AG04450 (cell line): ENCODE measurements at regions of chr15 and their contacts with region 1.

Region 1: DNA sequence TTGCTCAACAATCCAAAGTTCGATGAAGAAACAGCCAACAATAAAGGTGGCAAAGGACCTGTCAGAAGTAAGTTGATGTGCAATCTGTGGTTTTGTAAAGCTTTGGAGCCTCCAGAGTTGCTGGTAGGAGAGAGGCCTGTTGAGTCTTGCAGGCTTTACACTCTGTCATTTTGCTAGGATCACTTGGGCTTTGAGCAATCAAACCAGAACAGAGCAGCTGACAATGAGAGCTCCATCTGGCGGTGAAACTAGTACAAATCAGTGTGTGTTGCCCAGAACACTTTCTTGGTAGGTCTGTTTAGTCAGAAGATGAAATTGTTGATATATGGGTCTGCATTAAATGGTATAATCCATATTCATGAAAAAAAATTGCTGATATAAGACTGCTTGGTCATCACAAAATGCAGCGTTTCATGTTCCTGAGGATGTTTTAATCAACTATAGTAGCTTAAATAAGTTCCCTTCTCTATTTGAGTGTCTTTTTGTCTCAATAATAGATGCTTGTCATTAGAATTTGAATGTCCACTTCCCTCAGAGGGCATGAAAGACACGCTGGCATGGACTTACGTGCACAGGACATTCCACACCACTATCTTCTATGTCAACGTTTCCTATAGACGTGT is 25.7 kb downstream of the TMOD2 start:
- DNase-seq: peak; percentile 58
- H3K4me3 ChIP-seq: no peak overlapping the region
- H3K27ac ChIP-seq: no peak overlapping the region
- H3K27me3 ChIP-seq: no peaks in the 10 kb centered on the region
- CTCF ChIP-seq: peak; percentile 84

Region 2: GRCh38 chr15:51484781-51485180 is 292.3 kb before region 1 on chr15:
- CTCF ChIA-PET with region 1: no interaction called
- POLR2A ChIA-PET with region 1: no interaction called
- DNase-seq: no peak
- H3K4me3 ChIP-seq: no peak overlapping the region
- H3K27ac ChIP-seq: no peak overlapping the region
- H3K27me3 ChIP-seq: no peaks in the 10 kb centered on the region
- CTCF ChIP-seq: no peak

Region 3: GRCh38 chr15:51634591-51635198 is 142.4 kb before region 1 on chr15:
- CTCF ChIA-PET with region 1: interaction called, 18 read pairs
- POLR2A ChIA-PET with region 1: no interaction called
- DNase-seq: no peak
- H3K4me3 ChIP-seq: no peak overlapping the region
- H3K27ac ChIP-seq: no peak overlapping the region
- H3K27me3 ChIP-seq: peaks cover under 1% of the 10 kb centered on the region
- CTCF ChIP-seq: no peak

Region 4: GRCh38 chr15:51658670-51659069 is 118.4 kb before region 1 on chr15:
- CTCF ChIA-PET with region 1: interaction called, 22 read pairs
- POLR2A ChIA-PET with region 1: no interaction called
- DNase-seq: no peak
- H3K4me3 ChIP-seq: no peak overlapping the region
- H3K27ac ChIP-seq: no peak overlapping the region
- H3K27me3 ChIP-seq: no peaks in the 10 kb centered on the region
- CTCF ChIP-seq: no peak

Region 5: GRCh38 chr15:51726351-51727073 is 50.6 kb before region 1 on chr15:
- CTCF ChIA-PET with region 1: interaction called, 22 read pairs
- POLR2A ChIA-PET with region 1: no interaction called
- DNase-seq: peak; percentile 68
- H3K4me3 ChIP-seq: no peak overlapping the region
- H3K27ac ChIP-seq: no peak overlapping the region
- H3K27me3 ChIP-seq: no peaks in the 10 kb centered on the region
- CTCF ChIP-seq: peak; percentile 9; the same call in 1 of the 2 replicates

Region 6: DNA sequence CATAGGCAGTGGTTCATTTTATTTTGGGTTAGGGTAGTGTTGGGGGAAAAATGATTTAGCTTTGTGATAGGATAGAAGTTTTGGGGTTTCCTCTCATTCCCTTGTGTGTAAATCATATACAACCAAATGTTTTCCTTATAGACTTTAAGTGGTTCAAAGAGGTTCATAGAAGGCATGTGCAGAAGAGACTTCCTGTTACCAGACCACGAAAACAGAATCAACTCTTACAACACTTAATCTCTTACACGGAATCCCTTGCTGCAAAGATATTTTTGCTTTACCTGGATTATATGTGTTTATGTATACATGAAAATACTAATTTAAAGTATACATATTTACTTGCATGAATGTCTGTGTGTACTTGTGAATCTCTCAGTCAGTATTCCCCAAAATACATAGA is 22.8 kb before region 1 on chr15:
- CTCF ChIA-PET with region 1: interaction called, 41 read pairs
- POLR2A ChIA-PET with region 1: no interaction called
- DNase-seq: no peak
- H3K4me3 ChIP-seq: no peak overlapping the region
- H3K27ac ChIP-seq: no peak overlapping the region
- H3K27me3 ChIP-seq: peaks cover 16% of the 10 kb centered on the region
- CTCF ChIP-seq: no peak

Region 7: DNA sequence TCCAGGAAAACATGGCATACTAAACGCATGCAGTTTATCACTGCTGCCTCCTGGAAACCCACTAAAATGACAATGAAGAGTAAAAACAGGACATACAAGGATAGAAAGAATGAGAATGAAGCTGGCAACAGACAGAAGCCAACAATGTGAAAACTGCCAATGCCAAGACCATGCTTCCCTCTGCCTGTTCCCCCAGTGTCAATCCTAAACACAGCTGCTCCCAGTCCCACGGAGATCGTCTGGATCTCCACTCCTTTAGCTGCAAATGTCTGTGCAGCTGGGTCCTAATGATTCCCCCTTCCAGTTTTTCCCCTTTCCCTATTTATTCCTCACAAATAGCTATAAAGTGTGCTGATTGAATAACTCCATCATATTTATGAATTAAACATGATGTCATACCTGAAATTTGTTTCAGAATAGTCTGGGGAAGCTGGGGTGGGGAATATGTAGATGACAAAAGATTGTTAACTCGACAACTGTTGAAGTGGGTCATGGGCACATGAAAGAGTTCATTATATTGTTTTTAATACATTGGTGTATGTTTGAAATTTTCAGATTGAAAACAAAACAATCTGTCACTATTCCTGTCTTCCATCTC is 178.5 kb after region 1 on chr15:
- CTCF ChIA-PET with region 1: no interaction called
- POLR2A ChIA-PET with region 1: no interaction called
- DNase-seq: no peak
- H3K4me3 ChIP-seq: no peak overlapping the region
- H3K27ac ChIP-seq: no peak overlapping the region
- H3K27me3 ChIP-seq: no peaks in the 10 kb centered on the region
- CTCF ChIP-seq: no peak

Region 8: DNA sequence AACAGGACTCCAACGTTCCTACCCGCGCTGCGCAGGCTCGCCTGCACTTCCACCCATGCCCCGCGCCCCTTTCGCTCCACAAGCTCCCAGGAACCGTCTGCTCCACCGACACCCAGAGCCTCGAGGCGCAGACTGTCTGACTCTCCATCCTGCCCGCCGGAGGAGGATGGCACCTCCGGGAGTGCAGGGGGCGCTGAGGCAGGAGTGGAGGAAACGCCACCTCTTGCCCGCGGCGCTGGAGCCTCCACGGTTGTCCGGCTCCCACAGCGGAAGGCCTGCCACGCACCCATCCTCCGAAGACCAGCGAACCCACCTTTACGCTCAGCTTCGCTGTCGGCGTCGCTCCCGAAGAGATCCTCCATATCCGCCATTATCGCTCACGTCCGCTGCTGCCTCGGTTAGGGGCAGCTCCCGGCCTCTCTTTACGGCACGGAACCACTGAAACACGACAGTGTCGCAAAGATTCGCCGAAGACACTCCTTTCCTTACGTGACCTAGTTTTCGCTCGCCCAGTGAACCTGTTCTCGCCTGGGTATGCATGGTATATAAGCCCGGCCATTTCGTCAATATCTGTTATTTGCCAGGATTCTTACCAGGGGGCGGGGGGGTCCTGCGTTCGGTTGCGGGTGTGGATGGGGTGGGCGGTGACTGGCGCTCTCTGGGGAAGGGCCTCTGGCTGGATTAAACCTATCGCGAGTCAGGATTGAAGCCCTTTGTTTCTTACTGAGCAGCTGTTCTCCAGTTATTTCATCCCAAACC is 194.5 kb after region 1 on chr15 and contains the start of gene LEO1:
- CTCF ChIA-PET with region 1: no interaction called
- POLR2A ChIA-PET with region 1: no interaction called
- DNase-seq: peak; percentile 97
- H3K4me3 ChIP-seq: peak within 1 kb of the TSS; percentile 96
- H3K27ac ChIP-seq: peak within 1 kb of the TSS; percentile 87
- H3K27me3 ChIP-seq: no peaks in the 10 kb centered on the region
- CTCF ChIP-seq: peak; percentile 51
- polyA plus RNA-seq, gene LEO1: 6.8 and 8.0 TPM in 2 replicates